H1 (cell line): ENCODE measurements at regions of chr3 and their contacts with region 1.

Region 1: DNA sequence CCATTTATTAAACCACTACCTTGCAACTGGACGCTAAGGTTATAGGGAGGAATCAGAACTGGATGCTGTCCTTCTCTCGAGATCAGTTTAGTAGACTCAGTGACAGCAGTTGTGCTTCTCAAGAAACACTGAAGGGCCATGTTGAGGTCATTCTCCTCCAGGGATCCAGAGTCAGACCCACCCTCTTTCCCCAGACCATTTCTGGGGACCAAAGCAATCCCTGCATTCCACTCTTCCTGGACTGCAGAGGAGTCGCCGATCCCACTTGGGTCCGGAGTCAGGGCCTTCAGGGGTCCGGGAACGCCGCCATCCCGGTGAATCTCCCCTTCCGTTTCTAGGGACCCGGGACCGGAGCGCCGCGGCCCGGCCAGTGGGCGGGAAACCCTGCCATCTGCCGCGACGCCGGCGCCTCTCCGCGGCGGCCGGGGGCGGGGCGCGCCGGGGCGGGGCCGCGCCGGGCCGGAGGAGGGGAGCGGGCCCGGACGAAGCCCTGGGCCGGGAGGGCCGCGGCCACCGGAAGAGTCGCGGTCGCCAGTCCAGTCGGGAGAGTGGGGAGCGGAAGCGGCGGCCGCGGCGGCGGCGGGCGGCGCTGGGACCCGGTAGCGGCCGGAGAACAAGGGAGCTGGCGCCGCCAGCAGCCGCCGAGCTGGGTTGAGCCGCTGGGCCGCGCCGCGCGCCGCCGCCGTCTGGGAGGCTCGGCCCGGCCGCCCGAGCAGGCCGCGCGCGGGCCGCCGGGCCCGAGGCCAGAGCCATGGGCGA is at the start of gene DVL3:
- DNase-seq: peak in 1 of 2 experiments; percentile 76
- H3K4me3 ChIP-seq: peak within 1 kb of the TSS; percentile 93 to 99 (median 98)
- H3K27ac ChIP-seq: peak within 1 kb of the TSS; percentile 62; the same call in 1 of the 2 replicates
- H3K4me1 ChIP-seq: peaks cover 2 to 9% (median 5%) of the 10 kb centered on the region in 4 experiments; a peak in 6 of 7 replicates
- H3K27me3 ChIP-seq: no peaks in the 10 kb centered on the region
- CTCF ChIP-seq: no peak
- EP300 ChIP-seq: no peak
- POLR2A ChIP-seq: peak in 1 of 2 experiments; percentile 57; a peak in 2 of 3 replicates
- RAD21 ChIP-seq: no peak
- total RNA-seq, gene DVL3: 64.9 and 66.6 TPM in 2 replicates

Region 2: GRCh38 chr3:184135149-184135910 is 19.7 kb before region 1 on chr3 and contains the start of gene EIF2B5:
- CTCF ChIA-PET with region 1: interaction called, 7 read pairs
- POLR2A ChIA-PET with region 1: interaction called, 21 read pairs
- DNase-seq: peak; percentile 66 to 90
- H3K4me3 ChIP-seq: peak within 1 kb of the TSS; percentile 82 to 98 (median 88)
- H3K27ac ChIP-seq: peak within 1 kb of the TSS; percentile 32; the same call in 1 of the 2 replicates
- H3K4me1 ChIP-seq: peaks cover 2 to 9% (median 3%) of the 10 kb centered on the region in 4 experiments; a peak in 4 of 7 replicates
- H3K27me3 ChIP-seq: no peaks in the 10 kb centered on the region
- CTCF ChIP-seq: peak; percentile 21 to 27 (median 22); a peak in 3 of 4 replicates
- EP300 ChIP-seq: 0 out of 3 replicates have a peak, but pooled peaks of 1 of the 2 experiments have one; percentile 25
- POLR2A ChIP-seq: peak; percentile 83 to 85
- RAD21 ChIP-seq: peak in 1 of 2 experiments; percentile 15; a peak in 1 of 4 replicates
- total RNA-seq, gene EIF2B5: 40.0 and 42.5 TPM in 2 replicates

Region 3: GRCh38 chr3:184174646-184175492 is 19.8 kb after region 1 on chr3 and contains the start of gene AP2M1:
- CTCF ChIA-PET with region 1: interaction called, 7 read pairs
- POLR2A ChIA-PET with region 1: interaction called, 26 read pairs
- DNase-seq: peak; percentile 96 to 98
- H3K4me3 ChIP-seq: peak within 1 kb of the TSS; percentile 68 to 92 (median 86)
- H3K27ac ChIP-seq: peak within 1 kb of the TSS; percentile 87
- H3K4me1 ChIP-seq: peaks cover 0 to 23% (median 15%) of the 10 kb centered on the region in 4 experiments; a peak in 6 of 7 replicates
- H3K27me3 ChIP-seq: no peaks in the 10 kb centered on the region
- CTCF ChIP-seq: 0 out of 4 replicates have a peak, but pooled peaks of 1 of the 3 experiments have one; percentile 5
- EP300 ChIP-seq: no peak
- POLR2A ChIP-seq: peak in 1 of 2 experiments; percentile 71; a peak in 2 of 3 replicates
- RAD21 ChIP-seq: no peak
- total RNA-seq, gene AP2M1: 391 and 403 TPM in 2 replicates

Region 4: DNA sequence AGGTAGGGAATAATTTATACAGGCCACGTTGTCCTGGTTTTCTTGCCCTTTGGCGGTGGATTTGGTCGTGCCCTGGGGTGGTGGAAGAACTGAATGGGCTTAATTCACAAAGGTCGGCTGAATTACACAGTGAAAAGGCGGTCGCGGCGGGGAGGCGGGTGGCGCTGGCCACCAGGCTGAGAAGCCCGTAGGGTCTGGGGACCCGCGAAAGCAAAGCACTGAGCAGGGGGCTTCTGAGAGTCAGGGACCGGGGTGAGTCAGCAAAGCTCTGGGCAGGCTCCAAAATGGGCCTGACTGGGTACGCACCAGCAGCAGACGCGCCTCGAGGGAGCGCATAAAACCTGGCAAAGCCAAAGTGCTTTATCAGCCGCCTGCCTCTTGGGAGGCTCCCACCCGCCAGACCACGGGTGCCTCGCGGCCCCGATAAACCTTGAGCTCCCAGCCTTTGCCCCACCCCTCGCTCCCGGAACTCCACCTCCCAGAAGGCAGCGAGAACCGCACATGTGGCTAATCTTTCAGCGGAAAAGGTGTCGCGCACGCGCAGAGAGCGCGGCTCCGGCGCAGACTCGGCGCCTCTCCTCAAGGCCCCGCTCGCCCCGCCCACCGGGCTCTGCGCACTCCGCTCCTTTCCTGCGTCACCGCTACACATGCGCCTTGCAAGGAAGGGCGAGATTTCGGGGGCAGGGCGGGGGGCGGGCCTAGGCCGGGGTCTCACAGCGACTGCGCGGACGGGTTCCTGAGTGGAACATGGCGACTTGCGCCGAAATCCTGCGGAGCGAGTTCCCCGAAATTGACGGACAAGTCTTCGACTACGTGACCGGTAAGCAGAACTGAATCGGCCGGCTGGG is 30.6 kb after region 1 on chr3 and contains the start of gene ABCF3:
- CTCF ChIA-PET with region 1: interaction called, 5 read pairs
- POLR2A ChIA-PET with region 1: interaction called, 10 read pairs
- DNase-seq: peak; percentile 98 to 99
- H3K4me3 ChIP-seq: peak within 1 kb of the TSS; percentile 86 to 96 (median 94)
- H3K27ac ChIP-seq: peak within 1 kb of the TSS; percentile 92
- H3K4me1 ChIP-seq: peaks cover 0 to 8% (median 5%) of the 10 kb centered on the region in 4 experiments; a peak in 6 of 7 replicates
- H3K27me3 ChIP-seq: no peaks in the 10 kb centered on the region; a peak in 1 of 7 replicates
- CTCF ChIP-seq: no peak
- EP300 ChIP-seq: no peak
- POLR2A ChIP-seq: peak; percentile 90 to 94
- RAD21 ChIP-seq: no peak
- total RNA-seq, gene ABCF3: 50.9 and 51.6 TPM in 2 replicates